Activated naive CD4-positive, alpha-beta T cell treated with anti-CD3 and anti-CD28 coated beads for 36 hours (primary cell): ENCODE measurements at regions of chr17 and their contacts with region 1.

Region 1: DNA sequence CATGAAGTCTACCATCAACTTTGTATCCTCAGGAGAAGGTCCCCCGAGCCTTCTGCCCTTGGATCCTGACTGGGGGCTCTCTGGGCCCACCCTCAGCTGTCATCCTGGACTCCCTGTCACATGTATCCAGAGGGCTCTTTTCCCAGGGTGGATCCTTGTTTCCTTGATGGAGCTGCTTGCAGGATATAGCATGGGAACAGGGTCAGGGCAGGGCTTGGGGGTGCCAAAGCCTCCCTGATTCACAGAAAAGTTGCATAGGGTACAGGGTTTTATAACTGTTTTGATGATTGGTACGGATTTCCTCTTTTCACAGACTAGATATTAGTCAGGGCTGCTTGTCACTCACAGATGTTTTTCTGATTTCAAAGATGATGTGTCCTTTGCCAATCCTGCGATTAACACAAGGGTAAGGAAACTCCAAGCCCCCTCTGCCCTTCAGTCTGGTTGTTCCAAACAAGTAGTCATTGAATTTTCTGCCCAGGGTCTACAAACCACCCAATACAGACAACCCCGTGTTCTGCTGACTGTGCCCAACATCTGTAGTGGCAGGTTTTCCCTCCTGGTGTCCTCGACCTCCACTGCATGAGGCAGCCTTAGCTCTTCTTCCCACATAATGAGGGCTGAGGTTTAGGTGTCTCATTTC is 20.6 kb upstream of the SLC35G3 start:
- DNase-seq: peak; percentile 48
- H3K4me3 Mint-ChIP-seq: peak overlapping the region; percentile 45
- H3K27ac Mint-ChIP-seq: peak overlapping the region; percentile 88
- H3K4me1 Mint-ChIP-seq: peaks cover 84% of the 10 kb centered on the region
- H3K27me3 Mint-ChIP-seq: no peaks in the 10 kb centered on the region

Region 2: GRCh38 chr17:35170968-35171771 is 43.6 kb before region 1 on chr17:
- CTCF ChIA-PET with region 1: no interaction called
- intact Hi-C with region 1: loop called (anchors 5 kb)
- DNase-seq: no peak
- H3K4me3 Mint-ChIP-seq: no peak overlapping the region
- H3K27ac Mint-ChIP-seq: peak overlapping the region; percentile 61
- H3K4me1 Mint-ChIP-seq: peaks cover 33% of the 10 kb centered on the region
- H3K27me3 Mint-ChIP-seq: no peaks in the 10 kb centered on the region

Region 3: GRCh38 chr17:35235917-35236316 is 21.2 kb after region 1 on chr17:
- CTCF ChIA-PET with region 1: interaction called, 11 read pairs
- intact Hi-C with region 1: loop called (anchors 1 kb)
- DNase-seq: peak; percentile 43
- H3K4me3 Mint-ChIP-seq: no peak overlapping the region
- H3K27ac Mint-ChIP-seq: no peak overlapping the region
- H3K4me1 Mint-ChIP-seq: peaks cover 83% of the 10 kb centered on the region
- H3K27me3 Mint-ChIP-seq: no peaks in the 10 kb centered on the region